Left ventricle myocardium inferior (tissue), 1 donor: ENCODE measurements at regions of chr13 and their contacts with region 1.

Region 1: GRCh38 chr13:47415048-47415447 is 518.2 kb upstream of the HTR2A start:
- DNase-seq: no peak
- H3K4me3 ChIP-seq: no peak overlapping the region
- H3K27ac ChIP-seq: no peak overlapping the region
- H3K4me1 ChIP-seq: peaks cover 1% of the 10 kb centered on the region
- H3K27me3 ChIP-seq: no peaks in the 10 kb centered on the region
- CTCF ChIP-seq: no peak

Region 2: DNA sequence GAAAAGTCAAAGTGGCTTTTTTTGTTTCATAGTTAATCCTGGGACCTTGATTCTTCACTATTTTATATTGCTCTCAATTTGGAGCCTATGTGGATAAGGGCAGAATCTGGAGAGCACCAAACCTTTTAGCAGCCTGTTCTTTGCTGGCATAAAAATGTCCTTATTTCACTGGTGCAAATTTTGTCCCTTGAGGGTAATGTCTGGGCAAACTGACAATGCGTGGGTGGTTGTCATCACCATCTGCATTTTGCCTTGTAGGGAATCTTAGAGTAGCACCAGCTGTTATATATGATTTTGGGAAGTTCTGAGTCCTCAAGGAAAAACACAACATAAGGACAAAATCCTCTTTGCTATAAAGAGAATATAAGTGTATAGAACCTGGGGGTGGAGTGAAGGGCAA is 181.3 kb before region 1 on chr13:
- intact Hi-C with region 1: no loop called
- DNase-seq: peak; percentile 16
- H3K4me3 ChIP-seq: no peak overlapping the region
- H3K27ac ChIP-seq: no peak overlapping the region
- H3K4me1 ChIP-seq: no peaks in the 10 kb centered on the region
- H3K27me3 ChIP-seq: no peaks in the 10 kb centered on the region
- CTCF ChIP-seq: no peak

Region 3: DNA sequence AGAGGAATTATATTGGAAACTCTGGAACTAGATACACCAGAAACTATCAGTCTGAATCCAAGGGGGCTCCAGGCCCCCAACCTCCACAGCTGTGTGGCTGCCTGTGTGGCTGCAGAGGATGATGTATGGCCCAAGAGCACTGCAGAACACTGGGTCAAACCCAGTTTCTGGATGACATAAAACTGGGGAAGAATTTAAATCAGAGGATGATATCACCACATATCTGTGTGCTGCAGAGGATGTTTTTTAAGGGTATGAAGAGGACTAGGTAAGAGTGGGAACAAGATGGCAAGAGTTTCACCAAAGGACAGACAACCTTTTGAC is 359.6 kb after region 1 on chr13:
- intact Hi-C with region 1: loop called (anchors 10 kb)
- DNase-seq: no peak
- H3K4me3 ChIP-seq: no peak overlapping the region
- H3K27ac ChIP-seq: no peak overlapping the region
- H3K4me1 ChIP-seq: no peaks in the 10 kb centered on the region
- H3K27me3 ChIP-seq: no peaks in the 10 kb centered on the region
- CTCF ChIP-seq: no peak